ENCODE measurements at regions of chr10 and their contacts with region 1.

Region 1: GRCh38 chr10:97914837-97915211 is 65.2 kb downstream of the GOLGA7B start:
- DNase-seq: peak; percentile 74 to 88 (median 86)
- ATAC-seq: peak; percentile 93
- H3K4me3 ChIP-seq: no peak overlapping the region
- H3K4me1 ChIP-seq: no peaks in the 10 kb centered on the region
- CTCF ChIP-seq: peak; percentile 69

Region 2: GRCh38 chr10:97701438-97702069 is 213.3 kb before region 1 on chr10:
- intact Hi-C with region 1: no loop called
- DNase-seq: peak in 1 of 3 donors; percentile 74
- ATAC-seq: peak; percentile 84
- H3K4me3 ChIP-seq: no peak overlapping the region
- H3K4me1 ChIP-seq: peaks cover 6% of the 10 kb centered on the region
- CTCF ChIP-seq: peak; percentile 88

Region 3: DNA sequence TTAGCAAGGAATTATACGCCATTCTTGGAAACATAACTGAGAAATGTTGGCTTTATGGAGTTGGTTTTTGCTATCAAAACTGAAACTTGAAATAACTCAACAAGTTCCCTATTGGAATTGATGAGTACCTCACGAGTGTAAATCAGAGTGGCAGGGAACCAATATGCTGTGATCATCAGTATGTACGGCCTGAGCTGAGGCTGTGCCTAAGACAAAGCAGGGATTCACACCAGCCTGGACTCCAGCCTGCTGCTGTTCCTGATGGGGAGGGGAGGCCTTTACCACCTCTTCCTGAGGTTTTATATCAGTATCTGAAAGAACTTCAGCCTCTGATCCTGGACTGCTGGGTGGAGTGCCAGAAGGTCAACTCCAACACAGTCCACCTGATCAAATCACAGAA is 62.8 kb after region 1 on chr10:
- intact Hi-C with region 1: no loop called
- DNase-seq: no peak
- ATAC-seq: no peak
- H3K4me3 ChIP-seq: no peak overlapping the region
- H3K4me1 ChIP-seq: no peaks in the 10 kb centered on the region
- CTCF ChIP-seq: no peak

Region 4: GRCh38 chr10:98041372-98042043 is 126.7 kb after region 1 on chr10:
- intact Hi-C with region 1: loop called (anchors 5 kb)
- DNase-seq: peak in 2 of 3 donors; percentile 68 to 84
- ATAC-seq: peak; percentile 77
- H3K4me3 ChIP-seq: no peak overlapping the region
- H3K4me1 ChIP-seq: no peaks in the 10 kb centered on the region
- CTCF ChIP-seq: peak; percentile 54